ENCODE measurements at regions of chr2 and their contacts with region 1.

Region 1: GRCh38 chr2:223465793-223466192 is 136.4 kb downstream of the SCG2 start:
- DNase-seq: peak; percentile 69 to 97
- H3K4me3 ChIP-seq: no peak overlapping the region
- H3K27ac ChIP-seq: peak overlapping the region in 1 of 2 donors; percentile 69
- H3K4me1 ChIP-seq: peaks cover 0 to 8% of the 10 kb centered on the region in 2 donors
- H3K27me3 ChIP-seq: no peaks in the 10 kb centered on the region
- CTCF ChIP-seq: no peak

Region 2: GRCh38 chr2:222860740-222861410 is 604.9 kb before region 1 on chr2 and contains the start of gene ACSL3:
- intact Hi-C with region 1: no loop called
- DNase-seq: peak; percentile 90 to 98
- H3K4me3 ChIP-seq: peak within 1 kb of the TSS; percentile 83 to 99
- H3K27ac ChIP-seq: peak within 1 kb of the TSS; percentile 94 to 96
- H3K4me1 ChIP-seq: peaks cover 0 to 29% of the 10 kb centered on the region in 2 donors
- H3K27me3 ChIP-seq: no peaks in the 10 kb centered on the region
- CTCF ChIP-seq: peak in 2 of 3 experiments; percentile 19 to 54
- total RNA-seq, gene ACSL3: 48.9 TPM

Region 3: DNA sequence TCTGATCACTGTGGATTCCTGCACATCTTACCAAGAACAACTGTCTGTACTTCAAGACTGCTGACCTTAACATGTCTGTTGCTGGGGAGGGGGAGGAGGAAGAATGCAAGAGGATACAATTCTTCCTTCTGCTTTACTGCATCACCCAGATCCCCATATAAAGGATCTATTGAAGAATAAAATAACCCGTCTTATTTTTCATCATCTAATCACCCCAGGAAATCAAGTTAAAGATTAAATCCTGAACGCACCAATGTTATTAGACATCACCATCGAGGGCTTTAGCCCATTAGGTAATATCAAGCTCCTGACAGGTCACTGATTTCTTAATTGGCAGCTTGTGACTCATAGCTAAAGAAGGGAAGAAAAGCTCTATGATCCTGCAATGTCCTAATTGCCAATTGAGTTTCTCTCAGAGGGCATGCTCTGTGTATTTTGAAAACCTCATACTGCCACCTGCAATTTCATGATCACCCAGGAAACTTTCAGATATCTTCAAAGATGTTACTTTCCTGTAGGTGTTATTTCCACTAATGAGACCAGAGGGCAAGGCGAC is 489.2 kb before region 1 on chr2:
- intact Hi-C with region 1: loop called (anchors 5 kb)
- DNase-seq: no peak
- H3K4me3 ChIP-seq: no peak overlapping the region
- H3K27ac ChIP-seq: no peak overlapping the region
- H3K4me1 ChIP-seq: no peaks in the 10 kb centered on the region
- H3K27me3 ChIP-seq: no peaks in the 10 kb centered on the region
- CTCF ChIP-seq: no peak

Region 4: DNA sequence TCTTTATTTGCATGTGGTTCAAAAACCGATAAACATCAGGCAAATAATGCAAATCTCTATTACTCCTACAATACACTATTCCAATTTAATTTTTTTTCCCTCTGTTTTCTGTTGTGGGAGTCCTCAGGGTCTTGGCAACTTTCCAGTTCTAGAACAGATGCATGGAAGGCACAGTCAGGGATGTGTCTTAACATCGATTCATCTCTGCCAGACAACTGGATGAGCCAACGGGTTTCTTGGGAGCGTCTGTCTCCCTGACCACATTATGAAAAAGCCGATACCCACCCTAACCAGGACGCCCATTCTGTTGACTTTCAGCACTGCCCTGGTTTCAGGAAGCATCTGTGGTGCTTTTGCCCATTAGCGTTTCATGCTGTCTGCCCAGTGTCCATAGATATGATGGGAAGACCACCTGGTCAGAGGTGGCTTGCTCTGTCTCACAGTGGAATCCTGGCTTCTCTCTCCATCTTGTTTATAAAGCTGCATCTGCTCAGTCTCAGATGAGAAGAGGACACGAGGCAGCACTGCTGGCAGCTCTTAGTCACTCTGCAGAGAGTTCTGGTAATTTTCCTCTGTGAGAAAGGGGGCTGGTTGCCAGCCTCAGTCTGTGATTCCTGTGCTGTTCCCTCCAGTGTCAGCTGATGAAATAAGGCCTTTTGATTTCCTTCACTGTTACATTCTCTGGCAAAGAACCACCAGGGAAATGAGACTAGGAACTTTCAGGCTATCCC is 471.7 kb before region 1 on chr2:
- intact Hi-C with region 1: loop called (anchors 5 kb)
- DNase-seq: peak; percentile 69 to 94
- H3K4me3 ChIP-seq: peak overlapping the region; percentile 19 to 40
- H3K27ac ChIP-seq: peak overlapping the region; percentile 77 to 96
- H3K4me1 ChIP-seq: peaks cover 9 to 16% of the 10 kb centered on the region in 2 donors
- H3K27me3 ChIP-seq: no peaks in the 10 kb centered on the region
- CTCF ChIP-seq: no peak

Region 5: DNA sequence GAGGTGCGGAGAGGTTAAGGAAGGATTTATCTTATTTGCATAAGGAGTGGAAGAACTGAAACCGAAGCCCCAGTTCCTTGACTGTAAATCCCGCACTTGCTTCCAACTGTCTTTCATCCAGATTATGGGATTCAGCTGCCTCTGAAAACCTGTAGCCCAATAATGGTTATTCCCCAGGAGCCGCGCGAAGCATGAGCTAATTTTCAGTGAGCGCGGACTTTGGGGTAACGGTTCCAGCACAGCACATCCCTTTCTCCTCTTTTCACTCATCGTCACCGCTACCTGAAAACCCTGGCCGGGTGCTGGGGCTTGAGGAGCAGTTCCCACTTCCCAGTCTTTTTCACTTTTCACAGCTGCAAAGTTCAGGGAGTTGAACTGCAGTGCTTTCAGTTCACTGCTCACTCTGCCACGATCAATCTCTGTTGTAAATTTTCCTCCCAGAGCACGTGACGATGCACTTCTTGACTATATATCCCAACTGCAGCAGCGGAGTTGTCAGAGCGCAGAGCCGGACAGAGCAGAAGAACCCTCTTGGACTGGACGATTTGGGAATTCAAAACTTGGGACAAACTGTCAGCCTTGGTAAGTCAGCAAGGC is 414.0 kb before region 1 on chr2 and contains the start of gene KCNE4:
- intact Hi-C with region 1: loop called (anchors 5 kb)
- DNase-seq: peak in 1 of 2 donors; percentile 72
- H3K4me3 ChIP-seq: peak within 1 kb of the TSS; percentile 57 to 68
- H3K27ac ChIP-seq: peak within 1 kb of the TSS; percentile 80 to 83
- H3K4me1 ChIP-seq: peaks cover 15 to 42% of the 10 kb centered on the region in 2 donors
- H3K27me3 ChIP-seq: no peaks in the 10 kb centered on the region
- CTCF ChIP-seq: no peak
- total RNA-seq, gene KCNE4: 18.3 TPM

Region 6: DNA sequence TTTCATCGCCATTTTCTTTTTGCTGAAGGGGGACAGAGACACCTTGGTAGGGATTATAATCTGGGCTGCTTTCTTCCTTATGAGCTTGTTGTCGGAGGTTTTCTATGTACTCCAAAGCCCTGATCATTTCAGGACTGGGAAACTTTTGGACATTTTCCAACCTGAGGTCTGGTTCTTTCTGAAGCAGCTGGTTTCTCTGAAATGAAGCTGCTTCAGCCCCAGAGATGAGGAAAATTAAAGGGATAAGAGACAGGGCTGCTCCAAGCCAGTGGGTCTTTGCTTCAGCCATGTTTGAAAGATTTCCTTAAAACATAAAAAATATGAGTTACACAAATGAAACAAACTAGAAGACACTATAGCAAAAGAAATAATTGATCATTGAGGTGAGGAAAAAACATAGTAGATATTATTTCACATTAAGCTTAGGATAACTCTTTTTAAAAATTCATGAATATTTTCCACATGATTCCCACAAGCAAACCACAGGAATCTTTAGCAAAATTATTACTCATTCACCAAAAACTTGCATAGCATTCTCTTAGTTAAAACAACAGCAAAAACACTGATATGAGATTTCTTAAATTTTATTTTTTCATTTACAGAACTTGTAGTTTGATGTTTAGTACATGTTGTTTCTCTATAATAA is 133.3 kb after region 1 on chr2:
- intact Hi-C with region 1: no loop called
- DNase-seq: no peak
- H3K4me3 ChIP-seq: no peak overlapping the region
- H3K27ac ChIP-seq: peak overlapping the region in 1 of 2 donors; percentile 21
- H3K4me1 ChIP-seq: peaks cover 0 to 3% of the 10 kb centered on the region in 2 donors
- H3K27me3 ChIP-seq: no peaks in the 10 kb centered on the region
- CTCF ChIP-seq: no peak

Region 7: GRCh38 chr2:223613017-223613950 is 147.5 kb after region 1 on chr2:
- intact Hi-C with region 1: loop called (anchors 2 kb)
- DNase-seq: peak; percentile 59 to 94
- H3K4me3 ChIP-seq: peak overlapping the region; percentile 37 to 43
- H3K27ac ChIP-seq: peak overlapping the region; percentile 71 to 77
- H3K4me1 ChIP-seq: peaks cover 0 to 9% of the 10 kb centered on the region in 2 donors
- H3K27me3 ChIP-seq: no peaks in the 10 kb centered on the region
- CTCF ChIP-seq: peak in 2 of 3 experiments; percentile 7 to 15

Region 8: DNA sequence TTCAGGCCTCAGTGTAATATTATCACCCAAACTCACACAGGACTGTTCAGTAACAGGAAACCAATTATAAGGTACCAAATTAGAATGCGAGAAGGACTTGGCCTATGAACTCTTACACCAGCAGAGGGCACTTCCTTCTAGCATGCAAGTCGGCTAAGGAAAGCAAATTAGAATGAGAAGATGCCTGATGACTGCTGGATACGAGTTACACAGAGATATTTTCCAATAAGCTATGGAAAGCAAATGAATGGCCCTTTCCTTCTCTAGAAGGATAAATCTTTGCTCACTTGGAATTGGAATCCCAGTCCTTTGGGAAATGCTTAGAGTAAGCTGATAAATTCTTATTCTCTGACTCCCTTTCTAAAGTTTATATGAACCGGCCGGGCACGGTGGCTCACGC is 261.8 kb after region 1 on chr2:
- intact Hi-C with region 1: loop called (anchors 10 kb)
- DNase-seq: no peak
- H3K4me3 ChIP-seq: no peak overlapping the region
- H3K27ac ChIP-seq: peak overlapping the region in 1 of 2 donors; percentile 39
- H3K4me1 ChIP-seq: peaks cover 4 to 9% of the 10 kb centered on the region in 2 donors
- H3K27me3 ChIP-seq: no peaks in the 10 kb centered on the region
- CTCF ChIP-seq: peak in 2 of 3 experiments; percentile 30 to 53

Region 9: GRCh38 chr2:223797811-223798721 is 332.3 kb after region 1 on chr2:
- intact Hi-C with region 1: loop called (anchors 5 kb)
- DNase-seq: no peak
- H3K4me3 ChIP-seq: no peak overlapping the region
- H3K27ac ChIP-seq: no peak overlapping the region
- H3K4me1 ChIP-seq: no peaks in the 10 kb centered on the region
- H3K27me3 ChIP-seq: no peaks in the 10 kb centered on the region
- CTCF ChIP-seq: peak; percentile 61 to 75 (median 68)